ENCODE measurements at regions of chr1 and their contacts with region 1.

Region 1: DNA sequence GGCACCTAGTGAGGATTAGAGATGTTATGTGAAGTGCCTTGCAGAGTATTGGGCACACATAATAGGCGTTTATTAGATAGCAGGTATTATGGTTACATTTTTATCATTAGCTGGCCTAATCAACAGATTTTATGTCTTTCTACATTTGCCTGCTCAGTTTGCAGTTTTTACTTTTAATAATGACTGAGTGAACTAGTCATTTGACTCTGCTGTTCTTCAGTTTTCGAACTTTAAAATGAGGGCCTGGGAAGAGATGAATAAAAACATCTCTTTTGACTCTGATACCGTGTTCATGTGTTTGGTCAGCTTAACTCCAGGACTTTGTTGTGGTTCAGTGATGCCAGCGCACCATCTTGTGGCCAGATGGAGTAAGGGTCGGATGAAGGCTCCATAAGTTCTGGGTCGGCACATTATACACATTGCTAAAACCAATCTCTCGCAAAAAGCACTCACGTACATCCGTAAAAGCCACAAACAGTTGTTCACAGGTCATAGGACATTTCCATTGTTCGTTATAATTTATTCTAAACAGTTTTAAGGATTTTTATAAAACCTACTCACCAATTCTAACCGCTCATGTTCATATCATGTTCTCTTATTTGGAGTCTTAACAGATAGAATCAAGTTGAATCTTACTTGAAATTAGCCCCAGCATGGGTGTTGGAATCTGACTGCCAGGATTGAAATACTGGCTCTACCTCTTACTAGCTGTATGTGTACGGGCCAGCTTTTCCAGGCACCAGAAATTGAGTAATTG is 78.4 kb upstream of the GPR88 start:
- DNase-seq: peak; percentile 87
- H3K4me3 ChIP-seq: no peak overlapping the region
- H3K27ac ChIP-seq: no peak overlapping the region
- H3K4me1 ChIP-seq: peaks cover 4% of the 10 kb centered on the region
- H3K27me3 ChIP-seq: no peaks in the 10 kb centered on the region
- CTCF ChIP-seq: peak; percentile 76 to 83
- POLR2A ChIP-seq: no peak

Region 2: GRCh38 chr1:99808391-99809115 is 651.0 kb before region 1 on chr1:
- CTCF ChIA-PET with region 1: interaction called, 17 read pairs
- POLR2A ChIA-PET with region 1: no interaction called
- dilution Hi-C with region 1: no loop called
- intact Hi-C with region 1: loop called (anchors 1 kb)
- DNase-seq: peak; percentile 87
- H3K4me3 ChIP-seq: peak overlapping the region in 1 of 3 experiments; percentile 15
- H3K27ac ChIP-seq: no peak overlapping the region
- H3K4me1 ChIP-seq: peaks cover 8% of the 10 kb centered on the region
- H3K27me3 ChIP-seq: peaks cover 15 to 21% of the 10 kb centered on the region in 2 experiments
- CTCF ChIP-seq: peak; percentile 23 to 41
- POLR2A ChIP-seq: no peak

Region 3: GRCh38 chr1:100080331-100080730 is 379.2 kb before region 1 on chr1:
- CTCF ChIA-PET with region 1: interaction called, 3 read pairs
- POLR2A ChIA-PET with region 1: no interaction called
- dilution Hi-C with region 1: no loop called
- intact Hi-C with region 1: loop called (anchors 5 kb)
- DNase-seq: no peak
- H3K4me3 ChIP-seq: no peak overlapping the region
- H3K27ac ChIP-seq: no peak overlapping the region
- H3K4me1 ChIP-seq: peaks cover 4% of the 10 kb centered on the region
- H3K27me3 ChIP-seq: no peaks in the 10 kb centered on the region
- CTCF ChIP-seq: no peak
- POLR2A ChIP-seq: no peak

Region 4: DNA sequence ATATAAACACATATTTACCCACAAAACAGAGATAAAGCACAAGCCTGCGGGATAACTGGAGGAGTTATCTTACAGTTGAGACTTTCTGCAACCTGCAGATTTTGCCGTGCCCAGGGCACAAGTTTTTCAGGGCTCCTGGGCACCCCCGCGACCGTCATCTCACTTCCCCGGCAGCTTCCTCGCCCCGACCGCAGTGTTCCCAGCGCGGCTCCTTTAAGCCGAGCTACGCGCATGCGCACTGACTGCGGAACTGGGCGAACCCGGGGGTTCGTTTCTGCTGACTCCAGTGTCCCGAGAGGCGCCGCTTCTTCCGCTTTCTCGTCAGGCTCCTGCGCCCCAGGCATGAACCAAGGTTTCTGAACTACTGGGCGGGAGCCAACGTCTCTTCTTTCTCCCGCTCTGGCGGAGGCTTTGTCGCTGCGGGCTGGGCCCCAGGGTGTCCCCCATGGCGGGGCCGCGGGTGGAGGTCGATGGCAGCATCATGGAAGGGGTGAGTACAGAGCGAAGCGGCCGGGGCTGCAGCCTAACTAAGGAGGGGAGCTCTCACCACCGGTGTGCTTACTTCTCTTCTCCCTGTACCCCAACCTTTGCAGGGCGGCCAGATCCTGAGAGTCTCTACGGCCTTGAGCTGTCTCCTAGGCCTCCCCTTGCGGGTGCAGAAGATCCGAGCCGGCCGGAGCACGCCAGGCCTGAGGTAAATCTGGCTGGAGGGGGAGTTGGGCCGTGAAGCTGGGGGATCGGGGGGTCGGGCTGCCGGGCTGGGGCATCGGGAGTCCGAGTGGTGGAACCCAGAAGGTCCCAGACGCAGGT is 193.4 kb before region 1 on chr1 and contains the start of gene RTCA:
- CTCF ChIA-PET with region 1: interaction called, 14 read pairs
- POLR2A ChIA-PET with region 1: interaction called, 3 read pairs
- dilution Hi-C with region 1: no loop called
- intact Hi-C with region 1: loop called (anchors 5 kb)
- DNase-seq: peak; percentile 92
- H3K4me3 ChIP-seq: peak within 1 kb of the TSS; percentile 67 to 92 (median 86)
- H3K27ac ChIP-seq: peak within 1 kb of the TSS; percentile 41
- H3K4me1 ChIP-seq: peaks cover 19% of the 10 kb centered on the region
- H3K27me3 ChIP-seq: no peaks in the 10 kb centered on the region
- CTCF ChIP-seq: no peak
- POLR2A ChIP-seq: peak; percentile 90
- total RNA-seq, gene RTCA: 44.8 and 46.6 TPM in 2 replicates

Region 5: DNA sequence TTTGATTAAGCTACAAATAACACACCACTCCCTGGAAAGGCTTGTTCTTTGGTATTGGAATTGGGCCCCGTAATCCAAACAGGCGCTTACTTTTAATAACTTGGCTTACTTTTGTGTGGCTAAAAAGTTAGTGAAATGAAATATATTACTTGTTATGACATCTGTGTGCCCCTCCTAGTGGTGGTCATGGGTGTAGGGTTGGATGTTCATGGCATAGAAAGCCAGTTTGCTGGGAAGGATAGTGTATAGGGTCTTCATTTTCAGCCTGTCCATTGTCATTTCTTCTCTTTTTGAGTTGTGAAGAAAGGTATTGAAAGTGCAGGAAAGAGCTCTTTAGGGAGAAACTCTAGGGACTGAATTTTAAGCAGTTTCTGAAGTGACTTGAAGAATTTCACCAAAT is 101.3 kb before region 1 on chr1:
- CTCF ChIA-PET with region 1: interaction called, 26 read pairs
- POLR2A ChIA-PET with region 1: no interaction called
- dilution Hi-C with region 1: no loop called
- intact Hi-C with region 1: no loop called
- DNase-seq: peak; percentile 47
- H3K4me3 ChIP-seq: no peak overlapping the region
- H3K27ac ChIP-seq: no peak overlapping the region
- H3K4me1 ChIP-seq: peaks cover 26% of the 10 kb centered on the region
- H3K27me3 ChIP-seq: no peaks in the 10 kb centered on the region
- CTCF ChIP-seq: peak; percentile 49
- POLR2A ChIP-seq: no peak

Region 6: GRCh38 chr1:100866041-100866900 is 406.7 kb after region 1 on chr1:
- CTCF ChIA-PET with region 1: interaction called, 261 read pairs
- POLR2A ChIA-PET with region 1: interaction called, 4 read pairs
- dilution Hi-C with region 1: loop called (anchors 10 kb)
- intact Hi-C with region 1: loop called (anchors 1 kb)
- DNase-seq: peak; percentile 78
- H3K4me3 ChIP-seq: peak overlapping the region in 1 of 3 experiments; percentile 33
- H3K27ac ChIP-seq: peak overlapping the region; percentile 70
- H3K4me1 ChIP-seq: peaks cover 17% of the 10 kb centered on the region
- H3K27me3 ChIP-seq: no peaks in the 10 kb centered on the region
- CTCF ChIP-seq: peak; percentile 44 to 49
- POLR2A ChIP-seq: no peak